GM12878 (cell line): ENCODE measurements at regions of chr11 and their contacts with region 1.

Region 1: GRCh38 chr11:4072668-4073285 is 21.8 kb upstream of the RRM1 start:
- DNase-seq: peak; percentile 51
- ATAC-seq: peak; percentile 95
- H3K4me3 ChIP-seq: no peak overlapping the region
- H3K27ac ChIP-seq: no peak overlapping the region
- H3K4me1 ChIP-seq: no peaks in the 10 kb centered on the region
- H3K27me3 ChIP-seq: no peaks in the 10 kb centered on the region
- CTCF ChIP-seq: peak; percentile 75 to 95 (median 83)
- EP300 ChIP-seq: no peak
- POLR2A ChIP-seq: no peak
- RAD21 ChIP-seq: peak; percentile 98

Region 2: GRCh38 chr11:3747684-3748083 is 325.1 kb before region 1 on chr11:
- CTCF ChIA-PET with region 1: interaction called, 10 read pairs
- POLR2A ChIA-PET with region 1: no interaction called
- RAD21 ChIA-PET with region 1: no interaction called
- SMC1A ChIA-PET with region 1: interaction called, 3 read pairs
- in situ Hi-C with region 1: no loop called
- intact Hi-C with region 1: no loop called
- DNase-seq: no peak
- ATAC-seq: no peak
- H3K4me3 ChIP-seq: no peak overlapping the region
- H3K27ac ChIP-seq: no peak overlapping the region
- H3K4me1 ChIP-seq: no peaks in the 10 kb centered on the region
- H3K27me3 ChIP-seq: no peaks in the 10 kb centered on the region
- CTCF ChIP-seq: no peak
- EP300 ChIP-seq: no peak
- POLR2A ChIP-seq: no peak
- RAD21 ChIP-seq: no peak

Region 3: DNA sequence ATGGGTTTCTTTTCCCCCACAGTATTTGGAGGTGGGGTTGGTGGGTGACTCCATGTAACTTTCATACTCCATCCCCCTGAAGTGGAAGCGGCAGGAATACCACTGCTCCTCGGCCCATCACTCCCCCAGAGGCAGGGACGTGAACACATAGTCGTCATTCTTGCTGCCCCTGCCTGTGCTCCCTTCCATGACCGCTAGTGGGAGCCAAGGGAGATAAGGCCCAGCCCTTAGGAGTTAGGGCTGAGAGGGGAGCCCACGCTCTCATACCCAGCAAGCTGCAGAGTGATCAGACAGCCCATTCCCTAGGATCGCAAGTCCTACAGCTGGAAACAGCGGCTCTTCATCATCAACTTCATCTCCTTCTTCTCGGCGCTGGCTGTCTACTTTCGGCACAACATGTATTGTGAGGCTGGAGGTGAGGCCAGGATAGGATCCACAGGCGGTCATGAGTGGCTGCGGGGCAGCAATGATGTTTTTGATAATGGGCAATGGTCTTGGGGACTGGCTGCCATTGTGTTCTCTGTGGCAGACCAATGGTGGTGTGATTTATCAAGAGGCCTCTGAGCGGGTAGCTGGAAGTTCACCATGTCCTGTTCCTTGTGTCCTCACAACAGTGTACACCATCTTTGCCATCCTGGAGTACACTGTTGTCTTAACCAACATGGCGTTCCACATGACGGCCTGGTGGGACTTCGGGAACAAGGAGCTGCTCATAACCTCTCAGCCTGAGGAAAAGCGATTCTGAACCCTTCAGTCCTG is 247.9 kb before region 1 on chr11:
- CTCF ChIA-PET with region 1: interaction called, 35 read pairs
- POLR2A ChIA-PET with region 1: no interaction called
- RAD21 ChIA-PET with region 1: interaction called, 10 read pairs
- SMC1A ChIA-PET with region 1: interaction called, 6 read pairs
- in situ Hi-C with region 1: no loop called
- intact Hi-C with region 1: loop called (anchors 1 kb)
- DNase-seq: no peak
- ATAC-seq: peak; percentile 97
- H3K4me3 ChIP-seq: no peak overlapping the region
- H3K27ac ChIP-seq: no peak overlapping the region
- H3K4me1 ChIP-seq: peaks cover 2% of the 10 kb centered on the region; the same call in 1 of the 2 replicates
- H3K27me3 ChIP-seq: no peaks in the 10 kb centered on the region
- CTCF ChIP-seq: peak; percentile 83 to 97 (median 96)
- EP300 ChIP-seq: no peak
- POLR2A ChIP-seq: peak; percentile 12; the same call in 1 of the 2 replicates
- RAD21 ChIP-seq: peak; percentile 75

Region 4: GRCh38 chr11:3867209-3868091 is 205.3 kb before region 1 on chr11:
- CTCF ChIA-PET with region 1: interaction called, 19 read pairs
- POLR2A ChIA-PET with region 1: interaction called, 5 read pairs
- RAD21 ChIA-PET with region 1: interaction called, 5 read pairs
- SMC1A ChIA-PET with region 1: interaction called, 16 read pairs
- in situ Hi-C with region 1: no loop called
- intact Hi-C with region 1: no loop called
- DNase-seq: peak; percentile 66
- ATAC-seq: peak; percentile 57
- H3K4me3 ChIP-seq: peak overlapping the region; percentile 28; the same call in 1 of the 2 replicates
- H3K27ac ChIP-seq: peak overlapping the region; percentile 82
- H3K4me1 ChIP-seq: peaks cover 65% of the 10 kb centered on the region
- H3K27me3 ChIP-seq: no peaks in the 10 kb centered on the region
- CTCF ChIP-seq: no peak
- EP300 ChIP-seq: no peak
- POLR2A ChIP-seq: no peak
- RAD21 ChIP-seq: no peak

Region 5: GRCh38 chr11:3894128-3894731 is 178.5 kb before region 1 on chr11:
- CTCF ChIA-PET with region 1: interaction called, 14 read pairs
- POLR2A ChIA-PET with region 1: no interaction called
- RAD21 ChIA-PET with region 1: interaction called, 5 read pairs
- SMC1A ChIA-PET with region 1: interaction called, 10 read pairs
- in situ Hi-C with region 1: no loop called
- intact Hi-C with region 1: no loop called
- DNase-seq: peak; percentile 91
- ATAC-seq: peak; percentile 98
- H3K4me3 ChIP-seq: peak overlapping the region; percentile 70
- H3K27ac ChIP-seq: peak overlapping the region; percentile 98
- H3K4me1 ChIP-seq: peaks cover 23% of the 10 kb centered on the region
- H3K27me3 ChIP-seq: no peaks in the 10 kb centered on the region
- CTCF ChIP-seq: no peak
- EP300 ChIP-seq: peak; percentile 81 to 85
- POLR2A ChIP-seq: peak; percentile 56
- RAD21 ChIP-seq: peak; percentile 36; the same call in 1 of the 2 replicates

Region 6: DNA sequence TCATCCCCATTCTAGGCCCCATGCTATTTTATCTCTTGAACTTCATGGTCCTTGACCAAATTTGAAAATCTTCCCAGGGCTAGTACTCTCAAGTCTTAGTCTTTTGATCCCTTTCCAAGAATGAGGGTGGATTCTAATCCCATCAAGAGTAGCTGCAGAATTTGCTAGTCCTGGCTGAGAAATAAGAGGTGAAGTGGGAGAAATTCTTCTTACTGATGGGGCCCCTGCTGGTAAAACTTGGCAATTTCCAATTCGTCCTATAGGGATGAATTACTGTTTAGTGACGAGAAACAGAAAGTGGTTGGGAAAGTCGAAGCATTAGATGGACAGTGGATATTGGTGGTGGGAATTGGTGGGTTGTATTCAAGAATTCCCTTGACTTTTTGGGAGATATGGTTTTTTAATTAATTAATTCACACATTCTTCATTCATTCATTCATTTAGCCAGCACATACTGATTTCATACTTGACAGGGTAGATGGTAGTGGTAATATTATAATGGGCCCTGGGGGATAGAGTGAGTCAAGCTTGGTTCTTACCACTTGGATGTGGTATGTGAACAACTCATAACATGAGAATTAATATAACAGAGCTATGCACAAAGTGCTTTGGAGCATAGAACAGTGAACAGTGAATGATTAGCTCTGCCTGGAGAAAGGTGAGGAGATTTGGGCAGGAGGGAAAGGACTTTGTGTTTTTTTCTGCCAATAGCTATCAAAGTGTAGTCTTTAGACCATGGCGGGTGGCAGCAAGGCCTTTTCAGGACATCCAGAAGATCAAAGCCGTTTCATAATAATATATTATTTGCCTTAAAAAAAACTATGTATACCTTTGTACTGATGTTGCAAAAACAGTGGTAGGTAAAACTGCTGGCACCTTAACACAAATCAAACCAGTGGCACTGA is 113.5 kb before region 1 on chr11:
- CTCF ChIA-PET with region 1: interaction called, 11 read pairs
- POLR2A ChIA-PET with region 1: no interaction called
- RAD21 ChIA-PET with region 1: interaction called, 5 read pairs
- SMC1A ChIA-PET with region 1: interaction called, 21 read pairs
- in situ Hi-C with region 1: no loop called
- intact Hi-C with region 1: no loop called
- DNase-seq: no peak
- ATAC-seq: peak; percentile 89
- H3K4me3 ChIP-seq: no peak overlapping the region
- H3K27ac ChIP-seq: no peak overlapping the region
- H3K4me1 ChIP-seq: peaks cover 4% of the 10 kb centered on the region; the same call in 1 of the 2 replicates
- H3K27me3 ChIP-seq: no peaks in the 10 kb centered on the region
- CTCF ChIP-seq: peak; percentile 25 to 32 (median 30); a peak in 3 of 6 replicates
- EP300 ChIP-seq: no peak
- POLR2A ChIP-seq: no peak
- RAD21 ChIP-seq: peak; percentile 41; the same call in 1 of the 2 replicates

Region 7: DNA sequence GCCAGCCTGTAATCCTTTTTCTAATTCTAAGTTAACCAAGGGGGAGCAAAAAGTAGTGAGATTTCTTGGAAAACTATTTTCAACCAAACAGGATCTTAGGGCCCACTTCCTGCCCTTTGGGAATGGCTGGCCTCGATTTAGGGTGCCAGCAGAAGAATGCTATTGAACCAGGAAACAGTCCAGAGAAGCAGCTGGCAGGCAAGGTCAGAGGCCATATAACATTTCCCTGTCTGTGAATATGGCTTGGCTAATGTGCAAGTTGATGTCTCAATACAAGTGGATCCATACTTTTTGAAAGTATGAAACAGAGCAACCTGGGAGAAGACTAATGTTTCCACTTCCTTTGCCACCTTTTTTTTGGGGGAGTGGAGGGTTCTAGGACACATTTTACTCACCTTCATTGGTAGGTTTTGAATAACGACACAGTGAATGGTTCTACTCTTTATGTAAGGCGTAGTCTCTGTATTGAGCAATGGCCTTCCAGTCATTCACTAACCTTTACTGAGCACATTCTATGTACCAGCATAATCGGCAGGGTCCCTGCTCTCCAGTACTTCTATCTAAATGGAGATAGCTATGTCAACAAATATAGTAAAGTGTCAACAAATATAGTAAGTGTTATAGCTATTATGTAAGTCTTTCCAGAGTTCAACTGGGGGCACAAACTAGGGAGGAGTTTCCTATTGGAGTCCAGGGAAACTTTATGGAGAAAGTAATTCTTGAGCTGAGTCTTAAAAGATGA is 12.4 kb before region 1 on chr11:
- CTCF ChIA-PET with region 1: interaction called, 45 read pairs
- POLR2A ChIA-PET with region 1: interaction called, 5 read pairs
- RAD21 ChIA-PET with region 1: interaction called, 11 read pairs
- SMC1A ChIA-PET with region 1: interaction called, 27 read pairs
- in situ Hi-C with region 1: no loop called
- intact Hi-C with region 1: no loop called
- DNase-seq: no peak
- ATAC-seq: no peak
- H3K4me3 ChIP-seq: no peak overlapping the region
- H3K27ac ChIP-seq: no peak overlapping the region
- H3K4me1 ChIP-seq: peaks cover 19% of the 10 kb centered on the region
- H3K27me3 ChIP-seq: no peaks in the 10 kb centered on the region
- CTCF ChIP-seq: no peak
- EP300 ChIP-seq: no peak
- POLR2A ChIP-seq: no peak
- RAD21 ChIP-seq: no peak